Activated CD4-positive, alpha-beta T cell treated with anti-CD3 and anti-CD28 coated beads, Interleukin-2, amount 10 ng/mL, durations not matched to agents 24 days and 14 days (primary cell): ENCODE measurements at regions of chr9 and their contacts with region 1.

Region 1: GRCh38 chr9:83707768-83708514 is at the start of gene UBQLN1:
- DNase-seq: peak; percentile 97
- H3K4me3 Mint-ChIP-seq: peak within 1 kb of the TSS; percentile 87
- H3K27ac Mint-ChIP-seq: peak within 1 kb of the TSS; percentile 99
- H3K4me1 Mint-ChIP-seq: peaks cover 26% of the 10 kb centered on the region
- H3K27me3 Mint-ChIP-seq: no peaks in the 10 kb centered on the region
- total RNA-seq, gene UBQLN1: 131 and 144 TPM in 2 replicates

Region 2: GRCh38 chr9:83670381-83670780 is 37.6 kb before region 1 on chr9:
- intact Hi-C with region 1: loop called (anchors 5 kb)
- DNase-seq: no peak
- H3K4me3 Mint-ChIP-seq: no peak overlapping the region
- H3K27ac Mint-ChIP-seq: no peak overlapping the region
- H3K4me1 Mint-ChIP-seq: peaks cover 2% of the 10 kb centered on the region
- H3K27me3 Mint-ChIP-seq: no peaks in the 10 kb centered on the region

Region 3: GRCh38 chr9:83688921-83689320 is 19.0 kb before region 1 on chr9:
- intact Hi-C with region 1: loop called (anchors 2 kb)
- DNase-seq: no peak
- H3K4me3 Mint-ChIP-seq: no peak overlapping the region
- H3K27ac Mint-ChIP-seq: peak overlapping the region; percentile 28
- H3K4me1 Mint-ChIP-seq: peaks cover 46% of the 10 kb centered on the region
- H3K27me3 Mint-ChIP-seq: no peaks in the 10 kb centered on the region

Region 4: GRCh38 chr9:84261082-84261746 is 553.3 kb after region 1 on chr9:
- intact Hi-C with region 1: loop called (anchors 10 kb)
- DNase-seq: peak; percentile 86
- H3K4me3 Mint-ChIP-seq: peak overlapping the region; percentile 44
- H3K27ac Mint-ChIP-seq: no peak overlapping the region
- H3K4me1 Mint-ChIP-seq: peaks cover 9% of the 10 kb centered on the region
- H3K27me3 Mint-ChIP-seq: peaks cover 14% of the 10 kb centered on the region